ENCODE measurements at regions of chr13 and their contacts with region 1.

Region 1: GRCh38 chr13:91381371-91381770 is 17.1 kb upstream of the GPC5 start:
- DNase-seq: peak in 1 of 5 donors; percentile 6
- H3K4me3 ChIP-seq: no peak overlapping the region
- H3K4me3 Mint-ChIP-seq: no peak overlapping the region
- H3K27ac ChIP-seq: no peak overlapping the region
- H3K27ac Mint-ChIP-seq: no peak overlapping the region
- H3K4me1 ChIP-seq: no peaks in the 10 kb centered on the region
- H3K4me1 Mint-ChIP-seq: peaks cover 3 to 5% (median 4%) of the 10 kb centered on the region in 4 donors
- H3K27me3 ChIP-seq: no peaks in the 10 kb centered on the region
- H3K27me3 Mint-ChIP-seq: peaks cover 4 to 11% of the 10 kb centered on the region in 2 donors

Region 2: DNA sequence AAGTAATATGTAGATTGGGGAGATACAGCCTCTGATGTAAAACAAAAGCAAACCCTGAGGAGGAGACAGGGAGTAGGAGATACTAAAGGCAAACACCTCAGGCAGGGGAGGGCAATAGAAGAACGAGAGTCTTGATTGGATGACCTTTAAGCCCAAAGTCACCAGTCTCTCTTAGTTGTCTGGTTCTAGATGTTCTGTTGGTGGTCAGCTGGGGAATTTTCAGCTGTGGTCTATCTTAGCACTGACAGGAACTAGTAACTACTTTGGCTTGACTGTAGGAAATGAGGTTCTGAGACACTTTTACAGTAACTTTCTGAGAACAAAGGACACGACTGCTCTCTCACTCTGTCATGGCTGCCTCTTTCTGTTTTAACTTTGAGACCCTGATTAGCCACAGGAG is 324.6 kb before region 1 on chr13:
- CTCF ChIA-PET with region 1: no interaction called
- POLR2A ChIA-PET with region 1: no interaction called
- intact Hi-C with region 1: no loop called
- DNase-seq: no peak
- H3K4me3 ChIP-seq: no peak overlapping the region
- H3K4me3 Mint-ChIP-seq: no peak overlapping the region
- H3K27ac ChIP-seq: no peak overlapping the region
- H3K27ac Mint-ChIP-seq: no peak overlapping the region
- H3K4me1 ChIP-seq: no peaks in the 10 kb centered on the region
- H3K4me1 Mint-ChIP-seq: no peaks in the 10 kb centered on the region
- H3K27me3 ChIP-seq: no peaks in the 10 kb centered on the region
- H3K27me3 Mint-ChIP-seq: no peaks in the 10 kb centered on the region

Region 3: GRCh38 chr13:91313103-91313502 is 68.3 kb before region 1 on chr13:
- CTCF ChIA-PET with region 1: no interaction called
- POLR2A ChIA-PET with region 1: no interaction called
- intact Hi-C with region 1: no loop called
- DNase-seq: peak; percentile 22 to 41 (median 31)
- H3K4me3 ChIP-seq: no peak overlapping the region
- H3K4me3 Mint-ChIP-seq: peak overlapping the region in 1 of 8 donors; percentile 39
- H3K27ac ChIP-seq: no peak overlapping the region
- H3K27ac Mint-ChIP-seq: no peak overlapping the region
- H3K4me1 ChIP-seq: no peaks in the 10 kb centered on the region
- H3K4me1 Mint-ChIP-seq: peaks cover 2 to 8% (median 5%) of the 10 kb centered on the region in 4 donors
- H3K27me3 ChIP-seq: no peaks in the 10 kb centered on the region
- H3K27me3 Mint-ChIP-seq: peaks cover 10 to 14% of the 10 kb centered on the region in 2 donors

Region 4: GRCh38 chr13:91323349-91323748 is 58.0 kb before region 1 on chr13:
- CTCF ChIA-PET with region 1: no interaction called
- POLR2A ChIA-PET with region 1: no interaction called
- intact Hi-C with region 1: no loop called
- DNase-seq: peak in 4 of 5 donors; percentile 10 to 24 (median 16)
- H3K4me3 ChIP-seq: no peak overlapping the region
- H3K4me3 Mint-ChIP-seq: no peak overlapping the region
- H3K27ac ChIP-seq: no peak overlapping the region
- H3K27ac Mint-ChIP-seq: no peak overlapping the region
- H3K4me1 ChIP-seq: no peaks in the 10 kb centered on the region
- H3K4me1 Mint-ChIP-seq: peaks cover 8 to 13% (median 10%) of the 10 kb centered on the region in 4 donors
- H3K27me3 ChIP-seq: no peaks in the 10 kb centered on the region
- H3K27me3 Mint-ChIP-seq: peaks cover 0 to 1% of the 10 kb centered on the region in 2 donors

Region 5: DNA sequence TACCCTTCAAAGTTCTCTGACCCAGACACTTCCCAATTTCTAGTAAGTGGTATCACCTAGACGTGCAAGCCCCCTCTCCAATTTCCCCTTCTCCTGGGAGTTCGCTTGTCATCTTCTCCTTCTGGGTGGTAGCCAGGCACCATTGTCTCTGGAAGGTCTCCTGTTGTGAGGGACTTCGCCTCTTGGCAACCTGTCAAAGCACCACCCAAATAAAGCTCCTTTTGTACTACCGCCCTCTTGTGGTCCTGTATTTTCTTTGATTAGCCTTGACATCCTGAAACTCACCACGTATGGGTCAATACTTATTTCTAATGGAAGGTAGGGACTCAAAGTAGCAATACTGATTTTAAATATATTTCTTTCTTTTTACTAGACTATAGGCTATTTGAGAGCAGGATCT is 25.2 kb after region 1 on chr13:
- CTCF ChIA-PET with region 1: interaction called, 10 read pairs
- POLR2A ChIA-PET with region 1: no interaction called
- intact Hi-C with region 1: no loop called
- DNase-seq: peak; percentile 19 to 24 (median 22)
- H3K4me3 ChIP-seq: no peak overlapping the region
- H3K4me3 Mint-ChIP-seq: no peak overlapping the region
- H3K27ac ChIP-seq: no peak overlapping the region
- H3K27ac Mint-ChIP-seq: no peak overlapping the region
- H3K4me1 ChIP-seq: no peaks in the 10 kb centered on the region
- H3K4me1 Mint-ChIP-seq: peaks cover 0 to 2% (median 0%) of the 10 kb centered on the region in 4 donors
- H3K27me3 ChIP-seq: peaks cover 3% of the 10 kb centered on the region
- H3K27me3 Mint-ChIP-seq: peaks cover 10 to 15% of the 10 kb centered on the region in 2 donors

Measured in CD4-positive, alpha-beta memory T cell (primary cell).